ENCODE measurements at regions of chr16 and their contacts with region 1.

Region 1: DNA sequence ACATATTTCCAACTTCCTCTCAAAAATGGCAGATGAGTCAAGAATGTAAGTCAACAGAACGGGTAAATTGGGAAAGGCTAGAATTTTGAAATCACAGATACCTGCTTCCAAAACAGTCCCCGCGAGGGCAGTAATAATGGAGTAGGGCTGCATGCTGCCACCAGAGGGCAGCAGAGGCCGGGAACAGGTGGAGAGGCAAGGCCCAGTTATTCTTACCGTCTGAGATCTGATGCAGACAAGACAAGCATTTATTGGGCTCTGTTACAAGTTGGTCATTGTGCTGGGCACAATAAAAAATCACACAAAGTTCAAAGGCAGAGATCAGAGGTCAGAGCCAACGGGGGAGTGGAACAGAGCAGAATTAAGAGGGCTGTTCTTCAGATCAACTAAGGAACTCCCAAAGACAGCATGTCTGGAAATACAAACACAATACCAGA is 8.8 kb upstream of the MLKL start:
- DNase-seq: peak; percentile 85
- CTCF ChIP-seq: peak; percentile 96

Region 2: GRCh38 chr16:74695450-74696422 is 13.7 kb before region 1 on chr16:
- CTCF ChIA-PET with region 1: interaction called, 12 read pairs
- POLR2A ChIA-PET with region 1: no interaction called
- DNase-seq: peak; percentile 91
- CTCF ChIP-seq: no peak